PC-3 (cell line): ENCODE measurements at regions of chrX and their contacts with region 1.

Region 1: DNA sequence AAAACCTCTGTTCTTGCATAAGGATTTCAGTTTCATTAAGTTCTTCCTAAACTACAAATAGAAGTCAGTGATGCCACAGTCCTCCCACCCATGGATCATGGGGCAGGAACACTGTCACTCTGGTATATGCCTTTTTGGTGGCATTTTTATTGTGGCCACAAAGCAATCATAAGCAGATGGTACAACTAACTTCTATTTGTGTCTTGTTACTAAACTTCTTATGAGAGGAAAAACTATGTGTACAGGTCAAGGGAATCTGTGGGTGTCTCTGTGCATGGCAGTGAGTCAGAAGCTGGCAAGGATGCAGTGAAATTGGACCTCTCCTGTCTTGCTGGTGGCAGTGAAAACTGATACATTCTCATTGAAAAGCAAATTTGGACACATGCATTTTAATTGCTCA is 245.0 kb upstream of the GPC4 start:
- DNase-seq: peak; percentile 87
- ATAC-seq: peak; percentile 97
- H3K4me3 ChIP-seq: no peak overlapping the region
- H3K27ac ChIP-seq: peak overlapping the region; percentile 67
- H3K4me1 ChIP-seq: peaks cover 22% of the 10 kb centered on the region
- H3K27me3 ChIP-seq: no peaks in the 10 kb centered on the region
- CTCF ChIP-seq: no peak

Region 2: DNA sequence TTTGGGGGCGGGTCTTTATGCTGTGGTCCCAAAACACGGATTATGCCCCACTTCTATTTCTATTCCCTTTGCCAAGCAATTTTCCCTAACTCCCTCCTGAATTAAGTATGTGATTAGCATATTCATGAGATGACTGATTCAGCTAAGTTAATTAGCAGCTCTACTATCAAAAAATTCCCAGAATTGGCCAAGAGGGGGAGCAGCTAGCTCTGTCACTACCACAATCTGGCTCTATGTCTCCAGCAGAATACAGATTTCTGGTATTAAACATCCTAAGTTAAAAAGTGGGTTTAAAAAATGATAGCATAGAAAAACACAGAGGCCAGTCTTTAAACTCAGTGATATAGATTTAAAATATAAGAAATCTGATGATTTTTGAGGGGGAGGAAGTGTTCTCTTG is 325.3 kb before region 1 on chrX:
- CTCF ChIA-PET with region 1: no interaction called
- POLR2A ChIA-PET with region 1: interaction called, 10 read pairs
- intact Hi-C with region 1: no loop called
- DNase-seq: peak; percentile 50
- ATAC-seq: peak; percentile 51
- H3K4me3 ChIP-seq: no peak overlapping the region
- H3K27ac ChIP-seq: no peak overlapping the region
- H3K4me1 ChIP-seq: no peaks in the 10 kb centered on the region
- H3K27me3 ChIP-seq: no peaks in the 10 kb centered on the region
- CTCF ChIP-seq: peak; percentile 71

Region 3: DNA sequence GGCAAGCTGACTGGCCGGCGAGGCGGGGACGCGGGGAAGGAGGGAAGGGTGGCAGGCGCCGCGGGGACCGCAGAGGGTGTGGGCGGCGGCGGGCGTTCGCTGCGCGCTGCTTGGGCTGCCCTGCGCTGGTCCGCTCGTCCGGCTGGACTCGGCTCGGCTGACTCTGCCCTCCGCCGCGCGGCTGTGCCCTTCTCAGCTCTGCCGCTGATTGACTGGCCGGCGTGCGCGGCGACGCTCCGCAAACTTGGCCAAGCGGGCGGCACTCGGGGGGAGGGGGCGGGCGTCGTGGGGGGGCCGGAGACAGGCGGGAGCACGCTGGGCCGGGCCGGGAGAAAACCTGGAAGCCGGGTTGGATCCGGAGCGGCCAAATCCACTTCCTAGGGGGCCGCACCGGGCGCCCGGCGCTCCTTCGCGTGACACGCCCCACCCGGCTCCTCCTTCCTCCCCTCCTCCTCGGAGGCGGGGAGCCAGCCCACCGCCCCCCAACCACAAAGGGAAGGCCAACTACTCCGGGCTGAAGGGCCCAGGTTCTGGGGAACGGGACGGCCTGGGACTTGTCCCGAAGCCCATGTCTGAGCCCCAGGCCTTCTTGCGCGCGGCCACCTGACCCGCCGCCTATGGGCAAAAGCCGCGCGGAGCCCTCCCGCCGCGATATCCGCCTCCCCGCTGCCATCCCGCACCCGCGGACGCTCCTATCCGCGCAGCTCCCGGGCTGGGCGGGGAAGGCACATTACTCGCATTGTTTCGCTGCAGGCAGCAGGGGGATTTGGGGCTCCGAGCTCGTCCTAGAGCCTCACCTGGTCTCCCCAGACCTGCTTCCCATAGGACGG is 244.8 kb before region 1 on chrX and contains the start of gene GPC4:
- CTCF ChIA-PET with region 1: no interaction called
- POLR2A ChIA-PET with region 1: no interaction called
- intact Hi-C with region 1: loop called (anchors 5 kb)
- DNase-seq: peak; percentile 76
- ATAC-seq: peak; percentile 80
- H3K4me3 ChIP-seq: peak within 1 kb of the TSS; percentile 97
- H3K27ac ChIP-seq: no peak within 1 kb of the TSS
- H3K4me1 ChIP-seq: 0 out of 2 replicates have a peak, but pooled peaks cover 3% of the 10 kb centered on the region
- H3K27me3 ChIP-seq: no peaks in the 10 kb centered on the region
- CTCF ChIP-seq: no peak
- total RNA-seq, gene GPC4: 4.0 and 6.4 TPM in 2 replicates

Region 4: DNA sequence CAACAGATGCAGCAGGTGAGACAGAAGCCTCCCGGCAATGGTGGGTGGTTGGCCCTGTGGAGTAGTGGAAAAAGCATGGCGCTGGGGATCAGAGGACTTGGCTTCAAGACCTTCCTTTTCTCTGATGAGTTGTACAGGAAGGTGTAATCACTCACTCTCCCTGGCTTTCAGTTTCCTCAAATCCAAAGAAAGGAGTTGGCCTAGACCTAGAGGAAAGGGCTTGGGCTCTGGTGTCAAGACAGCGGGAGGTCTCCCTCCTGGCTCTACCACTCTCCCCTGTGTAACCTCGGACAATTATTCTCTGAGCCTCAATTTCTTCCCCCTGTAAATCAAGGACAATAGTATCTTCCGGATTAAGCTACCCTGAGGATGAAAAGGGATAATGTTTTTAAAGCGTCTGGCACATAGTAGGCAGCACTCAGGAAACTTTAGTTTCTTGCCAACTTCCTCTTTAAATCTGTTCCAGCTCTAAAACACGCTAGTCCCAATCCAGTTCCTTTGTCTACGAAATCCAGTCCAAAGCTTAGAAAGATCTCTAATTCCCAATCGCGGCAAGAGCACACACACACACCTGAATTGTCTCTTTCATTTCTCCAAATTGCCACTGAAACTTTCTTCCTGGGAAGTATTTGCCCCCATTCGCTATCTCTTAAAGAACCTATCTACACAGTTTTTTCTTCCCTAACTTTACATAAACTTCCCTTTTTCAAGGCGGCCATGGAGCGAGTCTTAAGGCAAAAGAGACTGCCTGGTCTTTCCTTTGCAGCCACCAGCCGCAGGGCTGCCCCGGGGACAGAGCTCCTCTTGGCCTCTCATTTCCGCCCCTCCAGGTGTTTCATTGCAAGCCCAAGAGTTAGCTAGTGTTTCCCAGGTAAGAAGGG is 215.1 kb before region 1 on chrX:
- CTCF ChIA-PET with region 1: no interaction called
- POLR2A ChIA-PET with region 1: no interaction called
- intact Hi-C with region 1: loop called (anchors 10 kb)
- DNase-seq: peak; percentile 61
- ATAC-seq: peak; percentile 76
- H3K4me3 ChIP-seq: peak overlapping the region; percentile 68
- H3K27ac ChIP-seq: no peak overlapping the region
- H3K4me1 ChIP-seq: peaks cover 10% of the 10 kb centered on the region; the same call in 1 of the 2 replicates
- H3K27me3 ChIP-seq: no peaks in the 10 kb centered on the region
- CTCF ChIP-seq: no peak

Region 5: DNA sequence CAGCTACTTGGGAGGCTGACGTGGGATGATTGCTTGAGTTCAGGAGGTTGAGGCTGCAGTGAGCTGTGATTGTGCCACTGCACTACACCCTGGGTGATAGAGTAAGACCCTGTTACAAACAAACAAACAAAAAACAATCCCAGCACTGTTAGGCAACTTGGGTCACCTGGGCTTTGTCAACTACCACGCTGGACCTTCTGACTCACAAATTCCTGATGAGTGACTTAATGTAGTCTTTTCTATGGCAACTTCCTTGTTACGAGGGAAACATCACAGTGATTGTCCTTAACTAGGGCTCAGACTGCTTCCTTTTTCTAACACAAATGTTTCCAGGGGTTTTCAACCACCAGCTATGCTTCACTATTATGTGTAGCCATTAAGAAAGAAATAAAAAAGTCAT is 116.2 kb before region 1 on chrX:
- CTCF ChIA-PET with region 1: no interaction called
- POLR2A ChIA-PET with region 1: no interaction called
- intact Hi-C with region 1: loop called (anchors 1 kb)
- DNase-seq: peak; percentile 88
- ATAC-seq: peak; percentile 89
- H3K4me3 ChIP-seq: no peak overlapping the region
- H3K27ac ChIP-seq: peak overlapping the region; percentile 95
- H3K4me1 ChIP-seq: peaks cover 18% of the 10 kb centered on the region
- H3K27me3 ChIP-seq: no peaks in the 10 kb centered on the region
- CTCF ChIP-seq: no peak

Region 6: DNA sequence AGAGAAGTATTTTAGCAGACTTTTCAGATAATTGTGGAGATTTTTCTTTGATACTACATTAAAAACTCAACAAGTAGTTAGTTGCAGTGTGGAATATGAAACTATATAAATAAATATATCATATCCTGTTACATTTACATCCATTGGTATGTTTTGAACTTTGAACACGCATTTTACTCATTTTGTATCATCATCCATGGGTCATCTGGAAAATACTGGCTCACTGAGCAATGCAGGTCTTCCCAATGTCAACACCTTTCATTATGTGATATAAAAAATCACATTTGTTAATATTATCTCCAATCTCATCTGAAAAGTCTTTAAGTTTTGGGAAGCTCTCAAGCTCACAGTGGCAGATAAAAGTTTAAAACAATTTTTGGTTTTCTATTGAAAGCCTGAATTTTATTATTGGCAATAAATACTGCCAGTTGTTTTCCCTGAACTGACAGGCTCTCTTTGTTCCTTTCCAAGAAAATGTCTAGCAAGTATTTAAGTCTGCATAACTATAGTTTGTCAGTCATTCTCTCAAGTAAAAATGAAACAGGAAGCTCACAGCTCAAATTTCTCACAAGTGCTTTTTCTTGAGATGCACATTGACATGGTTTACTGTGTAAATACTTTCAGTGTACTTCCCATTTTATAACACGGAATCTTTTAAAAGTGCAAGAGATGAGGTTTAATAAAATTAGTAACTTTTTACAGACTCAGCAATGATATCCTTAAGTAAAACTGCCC is 61.5 kb before region 1 on chrX:
- CTCF ChIA-PET with region 1: no interaction called
- POLR2A ChIA-PET with region 1: no interaction called
- intact Hi-C with region 1: loop called (anchors 2 kb)
- DNase-seq: peak; percentile 69
- ATAC-seq: peak; percentile 78
- H3K4me3 ChIP-seq: peak overlapping the region; percentile 14
- H3K27ac ChIP-seq: peak overlapping the region; percentile 79
- H3K4me1 ChIP-seq: peaks cover 18% of the 10 kb centered on the region
- H3K27me3 ChIP-seq: no peaks in the 10 kb centered on the region
- CTCF ChIP-seq: no peak